Activated CD4-positive, alpha-beta memory T cell treated with anti-CD3 and anti-CD28 coated beads for 36 hours (primary cell): ENCODE measurements at regions of chr1 and their contacts with region 1.

Region 1: DNA sequence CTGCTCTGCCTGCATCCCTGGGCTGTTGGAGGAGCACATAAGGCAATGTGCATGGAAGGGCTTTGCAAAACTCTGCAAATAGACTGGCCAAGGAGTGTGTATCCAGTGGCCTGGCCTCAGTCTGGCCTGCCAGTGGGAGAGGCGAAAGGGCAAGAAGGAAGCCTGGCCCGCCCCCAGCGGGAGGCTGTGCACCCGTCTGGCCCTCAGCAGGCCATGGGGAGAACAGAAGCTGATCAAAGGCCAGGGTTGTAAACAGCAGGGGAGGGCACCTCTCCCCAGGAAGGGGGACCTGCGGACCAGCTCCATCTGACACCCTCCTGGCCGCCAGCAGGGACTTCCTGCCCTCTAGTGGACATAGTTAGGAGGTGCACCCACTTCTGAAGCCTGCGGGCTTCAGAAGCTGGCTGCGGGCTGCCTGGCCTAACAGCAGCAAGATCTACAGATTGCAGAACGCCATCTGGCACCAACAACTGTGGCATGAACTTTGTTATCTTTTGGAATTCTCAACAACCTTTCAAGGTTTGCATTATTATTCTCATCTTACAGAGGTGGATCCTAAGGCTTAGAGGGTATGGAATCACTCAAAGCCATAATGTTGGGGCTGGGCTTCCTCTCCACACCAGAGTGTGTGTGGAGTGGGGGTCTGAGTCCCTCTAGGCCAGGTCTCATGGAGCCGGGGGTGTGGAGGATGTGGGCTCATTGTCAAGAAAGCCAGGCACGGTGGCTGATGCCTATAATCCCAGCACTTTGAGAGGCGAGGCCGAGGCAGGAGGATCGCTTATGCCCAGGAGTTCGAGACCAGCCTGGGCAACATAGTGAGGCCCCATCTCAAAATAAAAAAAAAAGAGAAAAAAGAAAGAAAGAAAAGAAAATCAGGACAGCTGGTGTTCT is 18.9 kb upstream of the CDK18 start:
- DNase-seq: peak; percentile 75
- H3K4me3 Mint-ChIP-seq: peak overlapping the region; percentile 25
- H3K27ac Mint-ChIP-seq: no peak overlapping the region
- H3K4me1 Mint-ChIP-seq: peaks cover 10% of the 10 kb centered on the region
- H3K27me3 Mint-ChIP-seq: peaks cover 22% of the 10 kb centered on the region

Region 2: GRCh38 chr1:205321164-205321958 is 164.2 kb before region 1 on chr1 and contains the start of gene NUAK2:
- CTCF ChIA-PET with region 1: interaction called, 10 read pairs
- POLR2A ChIA-PET with region 1: no interaction called
- intact Hi-C with region 1: no loop called
- DNase-seq: peak; percentile 89
- H3K4me3 Mint-ChIP-seq: peak within 1 kb of the TSS; percentile 88
- H3K27ac Mint-ChIP-seq: peak within 1 kb of the TSS; percentile 72
- H3K4me1 Mint-ChIP-seq: peaks cover 60% of the 10 kb centered on the region
- H3K27me3 Mint-ChIP-seq: peaks cover 2% of the 10 kb centered on the region
- total RNA-seq, gene NUAK2: 4.4 to 4.5 TPM

Region 3: DNA sequence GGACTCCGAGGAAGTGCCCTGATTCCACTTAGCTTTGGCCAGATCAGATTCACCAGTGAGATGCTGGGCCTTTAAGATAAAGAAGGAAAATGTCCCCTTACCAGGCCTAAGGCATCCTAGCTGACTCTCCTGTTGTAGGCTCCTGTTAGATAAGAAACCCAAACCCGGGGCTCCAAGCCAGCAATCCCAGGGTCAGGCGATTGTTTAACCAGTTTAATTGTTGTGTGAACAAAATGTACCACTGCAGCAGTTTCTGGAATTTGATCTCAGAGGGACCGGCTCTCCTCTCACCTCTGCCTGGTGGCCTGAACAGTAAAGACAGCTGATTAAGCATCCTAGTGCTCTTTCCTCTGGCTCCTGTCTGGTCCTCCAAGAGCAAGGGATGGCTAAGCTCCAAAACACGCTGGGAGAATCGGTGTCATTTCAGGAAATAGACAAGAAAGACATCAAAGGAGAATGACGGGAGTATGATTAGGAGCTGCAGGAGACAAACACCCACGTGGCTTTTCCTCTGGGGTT is 119.6 kb before region 1 on chr1:
- CTCF ChIA-PET with region 1: interaction called, 10 read pairs
- POLR2A ChIA-PET with region 1: no interaction called
- intact Hi-C with region 1: no loop called
- DNase-seq: no peak
- H3K4me3 Mint-ChIP-seq: no peak overlapping the region
- H3K27ac Mint-ChIP-seq: no peak overlapping the region
- H3K4me1 Mint-ChIP-seq: no peaks in the 10 kb centered on the region
- H3K27me3 Mint-ChIP-seq: peaks cover 5% of the 10 kb centered on the region

Region 4: DNA sequence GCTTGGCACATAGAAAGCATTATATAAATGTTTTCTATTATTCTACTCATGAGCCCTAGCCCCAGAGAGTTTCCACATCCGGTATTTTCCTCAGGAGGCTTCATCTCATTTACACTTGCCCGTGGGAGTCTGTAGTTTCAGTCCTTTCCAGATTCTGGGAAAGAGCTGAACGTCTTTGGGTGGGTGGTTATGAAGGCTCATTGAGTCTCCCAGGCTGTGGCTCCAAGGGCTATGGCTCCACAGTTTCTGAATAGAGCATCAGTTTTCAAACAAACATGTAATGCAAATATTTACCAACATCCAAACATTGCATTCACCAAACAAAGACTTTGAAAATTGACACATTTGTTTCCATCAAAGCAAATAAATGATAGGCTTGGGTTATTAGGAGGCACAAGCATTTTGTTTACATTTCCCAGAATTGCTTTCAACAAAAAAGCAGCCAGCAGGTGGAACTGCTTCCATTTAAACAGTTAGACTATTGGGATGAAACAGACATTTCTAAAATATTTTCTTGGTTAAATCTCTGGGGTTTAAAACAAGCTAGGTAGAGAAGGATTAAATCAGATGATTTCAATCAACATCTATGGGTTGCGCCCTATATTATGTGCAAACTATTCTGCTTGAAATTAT is 62.5 kb before region 1 on chr1:
- CTCF ChIA-PET with region 1: interaction called, 44 read pairs
- POLR2A ChIA-PET with region 1: no interaction called
- intact Hi-C with region 1: no loop called
- DNase-seq: no peak
- H3K4me3 Mint-ChIP-seq: no peak overlapping the region
- H3K27ac Mint-ChIP-seq: no peak overlapping the region
- H3K4me1 Mint-ChIP-seq: no peaks in the 10 kb centered on the region
- H3K27me3 Mint-ChIP-seq: peaks cover 17% of the 10 kb centered on the region

Region 5: GRCh38 chr1:205456868-205457745 is 28.5 kb before region 1 on chr1:
- CTCF ChIA-PET with region 1: interaction called, 16 read pairs
- POLR2A ChIA-PET with region 1: no interaction called
- intact Hi-C with region 1: no loop called
- DNase-seq: no peak
- H3K4me3 Mint-ChIP-seq: no peak overlapping the region
- H3K27ac Mint-ChIP-seq: no peak overlapping the region
- H3K4me1 Mint-ChIP-seq: peaks cover 13% of the 10 kb centered on the region
- H3K27me3 Mint-ChIP-seq: peaks cover 59% of the 10 kb centered on the region

Region 6: DNA sequence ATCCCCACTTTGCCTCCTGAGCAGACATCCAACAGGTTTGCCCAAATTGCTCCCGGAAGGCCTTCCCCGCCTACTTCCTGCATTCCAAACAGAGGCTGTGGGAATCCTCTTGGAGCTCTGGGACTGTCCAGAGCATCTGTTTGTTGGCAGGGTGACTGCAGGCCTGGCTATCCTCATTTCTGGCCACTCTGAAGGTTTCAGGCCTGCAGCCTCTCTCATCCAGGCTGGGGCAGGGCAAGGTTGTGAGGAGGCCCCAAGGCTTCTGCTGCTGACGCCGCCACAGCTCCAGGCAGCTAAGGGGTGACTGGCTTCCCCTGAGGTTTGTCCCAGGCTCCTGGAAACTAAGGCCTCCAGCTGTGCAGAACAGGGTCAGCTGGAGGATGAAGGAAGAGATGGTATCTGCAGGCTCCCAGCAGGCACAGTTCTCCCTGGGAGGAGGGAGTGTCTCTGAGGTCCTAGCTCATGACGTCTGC is 30.2 kb after region 1 on chr1:
- CTCF ChIA-PET with region 1: interaction called, 321 read pairs
- POLR2A ChIA-PET with region 1: no interaction called
- intact Hi-C with region 1: no loop called
- DNase-seq: no peak
- H3K4me3 Mint-ChIP-seq: no peak overlapping the region
- H3K27ac Mint-ChIP-seq: no peak overlapping the region
- H3K4me1 Mint-ChIP-seq: no peaks in the 10 kb centered on the region
- H3K27me3 Mint-ChIP-seq: peaks cover 2% of the 10 kb centered on the region

Region 7: GRCh38 chr1:205678286-205679111 is 192.9 kb after region 1 on chr1:
- CTCF ChIA-PET with region 1: no interaction called
- POLR2A ChIA-PET with region 1: no interaction called
- intact Hi-C with region 1: no loop called
- DNase-seq: no peak
- H3K4me3 Mint-ChIP-seq: peak overlapping the region; percentile 72
- H3K27ac Mint-ChIP-seq: no peak overlapping the region
- H3K4me1 Mint-ChIP-seq: peaks cover 10% of the 10 kb centered on the region
- H3K27me3 Mint-ChIP-seq: peaks cover 13% of the 10 kb centered on the region